H1 (cell line): ENCODE measurements at regions of chr4 and their contacts with region 1.

Region 1: DNA sequence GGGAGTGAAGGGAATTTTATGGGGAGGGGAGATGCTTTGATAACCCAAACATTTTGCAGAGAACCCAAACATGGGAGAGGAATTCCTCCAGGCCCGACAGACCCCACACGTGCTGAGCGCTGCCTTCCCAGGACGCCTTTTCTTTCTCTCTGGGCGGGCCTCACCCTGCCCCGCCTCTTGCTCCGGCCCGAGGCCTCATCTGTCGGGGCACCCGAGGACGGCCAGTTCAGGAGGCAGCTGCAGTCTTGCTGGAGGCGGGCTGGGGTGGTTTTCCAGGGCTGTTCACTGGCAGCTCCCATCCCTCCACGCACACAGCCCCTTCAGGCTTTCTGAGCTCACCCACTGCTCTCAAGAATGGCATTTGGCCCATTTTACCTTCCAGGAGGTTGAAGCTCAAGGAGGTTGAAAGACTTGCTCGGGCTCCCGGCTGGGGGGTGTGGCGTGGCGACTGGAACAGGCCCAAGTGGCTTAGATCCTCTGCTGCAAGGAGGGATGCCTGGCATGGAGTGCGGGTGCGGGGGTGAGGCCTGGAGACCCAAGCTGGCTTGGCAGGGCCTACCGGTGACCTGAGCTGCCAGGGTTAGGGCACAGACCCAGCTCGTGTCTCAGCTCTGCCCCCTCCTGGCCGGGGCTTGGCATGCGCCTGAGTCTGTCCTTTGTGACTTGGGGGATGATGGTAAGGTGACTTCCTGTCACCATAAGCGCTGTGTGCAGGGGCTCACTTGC is 99.2 kb downstream of the PSAPL1 start:
- DNase-seq: peak; percentile 53 to 98
- H3K4me3 ChIP-seq: no peak overlapping the region
- H3K27ac ChIP-seq: no peak overlapping the region
- H3K4me1 ChIP-seq: peaks cover 0 to 6% (median 4%) of the 10 kb centered on the region in 4 experiments; a peak in 4 of 7 replicates
- H3K27me3 ChIP-seq: no peaks in the 10 kb centered on the region; a peak in 1 of 7 replicates
- CTCF ChIP-seq: peak in 2 of 3 experiments; percentile 87 to 97; a peak in 3 of 4 replicates
- EP300 ChIP-seq: no peak
- POLR2A ChIP-seq: no peak
- RAD21 ChIP-seq: peak; percentile 84 to 91

Region 2: GRCh38 chr4:7192252-7193029 is 143.1 kb before region 1 on chr4 and contains the start of gene SORCS2:
- CTCF ChIA-PET with region 1: interaction called, 26 read pairs
- POLR2A ChIA-PET with region 1: no interaction called
- DNase-seq: peak in 1 of 2 experiments; percentile 80
- H3K4me3 ChIP-seq: peak within 1 kb of the TSS; percentile 33 to 68 (median 48)
- H3K27ac ChIP-seq: no peak within 1 kb of the TSS
- H3K4me1 ChIP-seq: peaks cover 0 to 9% (median 5%) of the 10 kb centered on the region in 4 experiments; a peak in 4 of 7 replicates
- H3K27me3 ChIP-seq: peaks cover 10 to 53% (median 35%) of the 10 kb centered on the region in 4 experiments
- CTCF ChIP-seq: peak in 2 of 3 experiments; percentile 58 to 70; a peak in 3 of 4 replicates
- EP300 ChIP-seq: 0 out of 3 replicates have a peak, but pooled peaks of 1 of the 2 experiments have one; percentile 5
- POLR2A ChIP-seq: no peak
- RAD21 ChIP-seq: peak; percentile 43 to 69
- total RNA-seq, gene SORCS2: 0.75 and 1.8 TPM in 2 replicates

Region 3: GRCh38 chr4:7238300-7238960 is 97.1 kb before region 1 on chr4:
- CTCF ChIA-PET with region 1: interaction called, 80 read pairs
- POLR2A ChIA-PET with region 1: no interaction called
- DNase-seq: peak; percentile 10 to 66
- H3K4me3 ChIP-seq: no peak overlapping the region
- H3K27ac ChIP-seq: no peak overlapping the region
- H3K4me1 ChIP-seq: no peaks in the 10 kb centered on the region
- H3K27me3 ChIP-seq: no peaks in the 10 kb centered on the region
- CTCF ChIP-seq: peak in 2 of 3 experiments; percentile 70 to 87; a peak in 3 of 4 replicates
- EP300 ChIP-seq: no peak
- POLR2A ChIP-seq: no peak
- RAD21 ChIP-seq: peak; percentile 82 to 85

Region 4: GRCh38 chr4:7313347-7313811 is 22.1 kb before region 1 on chr4:
- CTCF ChIA-PET with region 1: interaction called, 19 read pairs
- POLR2A ChIA-PET with region 1: no interaction called
- DNase-seq: no peak
- H3K4me3 ChIP-seq: no peak overlapping the region
- H3K27ac ChIP-seq: no peak overlapping the region
- H3K4me1 ChIP-seq: peaks cover 0 to 6% (median 2%) of the 10 kb centered on the region in 4 experiments; a peak in 3 of 7 replicates
- H3K27me3 ChIP-seq: no peaks in the 10 kb centered on the region; a peak in 1 of 7 replicates
- CTCF ChIP-seq: no peak
- EP300 ChIP-seq: no peak
- POLR2A ChIP-seq: no peak
- RAD21 ChIP-seq: no peak

Region 5: DNA sequence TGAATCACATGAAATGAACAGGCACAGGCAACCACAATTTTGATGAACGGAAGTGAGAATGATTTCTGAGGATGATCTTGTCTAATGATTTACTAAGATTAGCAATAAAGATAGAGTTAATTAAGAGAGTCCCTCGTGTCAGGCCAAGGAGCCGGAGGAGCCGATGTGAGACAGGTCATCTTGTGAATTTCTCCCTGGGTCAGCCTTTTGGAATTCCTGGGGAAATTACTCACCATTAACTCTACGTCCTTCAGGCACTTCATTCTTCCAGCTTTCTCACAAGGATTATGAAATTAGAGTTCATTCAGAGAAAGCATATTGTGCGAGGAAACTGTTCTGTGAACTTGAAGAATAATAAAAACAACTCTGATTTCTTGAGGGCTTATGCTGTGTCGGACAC is 12.5 kb after region 1 on chr4:
- CTCF ChIA-PET with region 1: interaction called, 36 read pairs
- POLR2A ChIA-PET with region 1: no interaction called
- DNase-seq: no peak
- H3K4me3 ChIP-seq: no peak overlapping the region
- H3K27ac ChIP-seq: no peak overlapping the region
- H3K4me1 ChIP-seq: no peaks in the 10 kb centered on the region; a peak in 1 of 7 replicates
- H3K27me3 ChIP-seq: no peaks in the 10 kb centered on the region
- CTCF ChIP-seq: no peak
- EP300 ChIP-seq: no peak
- POLR2A ChIP-seq: no peak
- RAD21 ChIP-seq: no peak

Region 6: DNA sequence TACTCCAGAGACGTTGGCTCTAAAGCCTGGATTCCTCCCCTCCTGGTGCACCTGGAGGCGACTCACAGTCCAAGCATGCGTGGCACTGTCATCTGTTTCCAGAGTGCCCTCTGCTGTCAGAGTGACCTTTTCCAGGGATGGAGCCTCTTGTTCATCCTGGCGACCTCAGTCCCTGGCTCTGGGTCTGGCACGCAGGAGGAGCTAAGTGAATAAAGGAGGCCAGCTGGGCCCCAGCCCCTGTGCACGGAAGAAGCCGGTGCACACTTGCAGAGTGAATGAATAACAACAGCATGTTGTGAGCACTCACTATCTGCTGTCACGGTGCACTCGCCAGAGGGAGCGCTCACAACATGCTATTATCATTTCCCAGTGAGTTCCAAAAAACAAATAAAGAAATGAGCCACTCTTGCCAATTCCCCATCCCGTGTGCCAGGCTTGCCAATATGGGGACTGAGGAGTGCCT is 127.0 kb after region 1 on chr4:
- CTCF ChIA-PET with region 1: interaction called, 13 read pairs
- POLR2A ChIA-PET with region 1: no interaction called
- DNase-seq: peak in 1 of 2 experiments; percentile 19
- H3K4me3 ChIP-seq: no peak overlapping the region
- H3K27ac ChIP-seq: no peak overlapping the region
- H3K4me1 ChIP-seq: peaks cover 0 to 14% (median 10%) of the 10 kb centered on the region in 4 experiments; a peak in 6 of 7 replicates
- H3K27me3 ChIP-seq: no peaks in the 10 kb centered on the region
- CTCF ChIP-seq: peak in 1 of 3 experiments; percentile 42; a peak in 1 of 4 replicates
- EP300 ChIP-seq: no peak
- POLR2A ChIP-seq: no peak
- RAD21 ChIP-seq: peak; percentile 29 to 53; a peak in 3 of 4 replicates